Panc1 (cell line): ENCODE measurements at regions of chr5 and their contacts with region 1.

Region 1: GRCh38 chr5:6632917-6633468 is at the starts of genes NSUN2 and SRD5A1:
- DNase-seq: peak; percentile 85
- ATAC-seq: peak; percentile 96
- H3K4me3 ChIP-seq: peak within 1 kb of the TSS; percentile 96 to 100
- H3K27ac ChIP-seq: peak within 1 kb of the TSS; percentile 98
- H3K4me1 ChIP-seq: peaks cover 34% of the 10 kb centered on the region
- H3K27me3 ChIP-seq: no peaks in the 10 kb centered on the region
- CTCF ChIP-seq: no peak
- total RNA-seq, gene NSUN2: 125 TPM
- total RNA-seq, gene SRD5A1: 30.4 TPM

Region 2: GRCh38 chr5:6712577-6713275 is 79.7 kb after region 1 on chr5:
- CTCF ChIA-PET with region 1: no interaction called
- POLR2A ChIA-PET with region 1: no interaction called
- in situ Hi-C with region 1: no loop called
- intact Hi-C with region 1: loop called (anchors 10 kb)
- DNase-seq: peak; percentile 82
- ATAC-seq: peak; percentile 85
- H3K4me3 ChIP-seq: peak overlapping the region; percentile 73 to 87
- H3K27ac ChIP-seq: peak overlapping the region; percentile 97
- H3K4me1 ChIP-seq: peaks cover 24% of the 10 kb centered on the region
- H3K27me3 ChIP-seq: no peaks in the 10 kb centered on the region
- CTCF ChIP-seq: 0 out of 2 replicates have a peak, but pooled peaks have one; percentile 12

Region 3: GRCh38 chr5:6745706-6746222 is 112.8 kb after region 1 on chr5:
- CTCF ChIA-PET with region 1: interaction called, 3 read pairs
- POLR2A ChIA-PET with region 1: no interaction called
- in situ Hi-C with region 1: no loop called
- intact Hi-C with region 1: loop called (anchors 10 kb)
- DNase-seq: peak; percentile 45
- ATAC-seq: peak; percentile 74
- H3K4me3 ChIP-seq: no peak overlapping the region
- H3K27ac ChIP-seq: no peak overlapping the region
- H3K4me1 ChIP-seq: no peaks in the 10 kb centered on the region; the same call in 1 of the 2 replicates
- H3K27me3 ChIP-seq: no peaks in the 10 kb centered on the region
- CTCF ChIP-seq: peak; percentile 81

Region 4: GRCh38 chr5:7105358-7105757 is 472.4 kb after region 1 on chr5:
- CTCF ChIA-PET with region 1: no interaction called
- POLR2A ChIA-PET with region 1: no interaction called
- in situ Hi-C with region 1: no loop called
- intact Hi-C with region 1: no loop called
- DNase-seq: no peak
- ATAC-seq: no peak
- H3K4me3 ChIP-seq: no peak overlapping the region
- H3K27ac ChIP-seq: no peak overlapping the region
- H3K4me1 ChIP-seq: no peaks in the 10 kb centered on the region
- H3K27me3 ChIP-seq: no peaks in the 10 kb centered on the region
- CTCF ChIP-seq: no peak